Mammary epithelial cell (primary cell): ENCODE measurements at regions of chr16 and their contacts with region 1.

Region 1: GRCh38 chr16:70770626-70771552 is 30.1 kb downstream of the VAC14 start:
- DNase-seq: peak; percentile 47
- H3K4me3 ChIP-seq: no peak overlapping the region
- H3K27ac ChIP-seq: no peak overlapping the region
- H3K4me1 ChIP-seq: peaks cover 19% of the 10 kb centered on the region
- H3K27me3 ChIP-seq: no peaks in the 10 kb centered on the region
- CTCF ChIP-seq: peak; percentile 96 to 97

Region 2: GRCh38 chr16:70364399-70364798 is 406.5 kb before region 1 on chr16:
- CTCF ChIA-PET with region 1: no interaction called
- dilution Hi-C with region 1: loop called (anchors 10 kb)
- in situ Hi-C with region 1: no loop called
- intact Hi-C with region 1: no loop called
- DNase-seq: no peak
- H3K4me3 ChIP-seq: no peak overlapping the region
- H3K27ac ChIP-seq: no peak overlapping the region
- H3K4me1 ChIP-seq: no peaks in the 10 kb centered on the region
- H3K27me3 ChIP-seq: no peaks in the 10 kb centered on the region
- CTCF ChIP-seq: no peak

Region 3: GRCh38 chr16:70523076-70523742 is 247.7 kb before region 1 on chr16 and contains the start of gene COG4:
- CTCF ChIA-PET with region 1: no interaction called
- dilution Hi-C with region 1: no loop called
- in situ Hi-C with region 1: loop called in 1 of 2 experiments (anchors 25 kb)
- intact Hi-C with region 1: loop called (anchors 10 kb)
- DNase-seq: peak; percentile 77
- H3K4me3 ChIP-seq: peak within 1 kb of the TSS; percentile 90 to 97 (median 93)
- H3K27ac ChIP-seq: peak within 1 kb of the TSS; percentile 83
- H3K4me1 ChIP-seq: peaks cover 35% of the 10 kb centered on the region
- H3K27me3 ChIP-seq: no peaks in the 10 kb centered on the region
- CTCF ChIP-seq: no peak
- total RNA-seq, gene COG4: 42.7 to 52.0 TPM

Region 4: DNA sequence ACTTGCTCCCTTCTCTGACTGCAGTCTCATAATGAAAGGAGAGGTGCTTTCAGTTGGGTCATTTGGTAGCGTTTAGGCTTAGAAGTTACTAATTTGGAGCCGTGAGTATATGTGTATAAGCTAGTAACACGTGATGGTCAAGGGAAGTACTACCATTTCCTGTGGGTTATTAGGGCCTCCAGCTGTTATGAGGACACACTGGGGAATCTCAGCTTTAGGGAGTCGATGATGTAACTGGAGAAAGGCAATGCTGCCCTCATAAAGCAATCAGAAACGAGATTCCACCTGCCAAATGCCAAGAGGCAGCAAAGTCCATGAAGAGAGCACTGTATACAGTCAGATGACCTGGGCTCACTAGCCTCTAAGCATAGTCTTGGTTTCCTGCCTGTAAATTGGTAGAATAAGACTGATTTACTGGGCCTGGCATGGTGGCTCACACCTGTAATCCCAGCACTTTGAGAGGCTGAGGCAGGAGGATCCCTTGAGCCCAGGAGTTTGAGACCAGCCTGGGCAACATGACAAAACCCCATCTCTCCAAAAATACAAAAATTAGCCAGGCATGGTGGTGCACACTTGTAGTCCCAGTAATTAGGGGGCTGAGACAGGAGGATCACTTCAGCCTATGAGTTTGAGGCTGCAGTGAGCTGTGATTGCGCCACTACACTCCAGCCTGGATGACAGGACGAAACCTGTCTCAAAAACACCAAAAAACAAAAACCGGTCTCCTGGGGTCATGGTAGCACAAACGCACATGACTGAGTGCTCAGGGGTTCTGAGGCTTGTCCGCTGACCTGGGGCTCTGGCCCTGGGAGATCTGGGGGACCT is 194.2 kb before region 1 on chr16:
- CTCF ChIA-PET with region 1: no interaction called
- dilution Hi-C with region 1: no loop called
- in situ Hi-C with region 1: no loop called
- intact Hi-C with region 1: loop called (anchors 10 kb)
- DNase-seq: peak; percentile 86
- H3K4me3 ChIP-seq: no peak overlapping the region
- H3K27ac ChIP-seq: peak overlapping the region; percentile 37
- H3K4me1 ChIP-seq: peaks cover 68% of the 10 kb centered on the region
- H3K27me3 ChIP-seq: no peaks in the 10 kb centered on the region
- CTCF ChIP-seq: no peak

Region 5: GRCh38 chr16:70685938-70686375 is 84.9 kb before region 1 on chr16 and contains the start of gene MTSS2:
- CTCF ChIA-PET with region 1: interaction called, 3 read pairs
- dilution Hi-C with region 1: no loop called
- in situ Hi-C with region 1: loop called (anchors 10 kb)
- intact Hi-C with region 1: loop called (anchors 2 kb)
- DNase-seq: peak; percentile 59
- H3K4me3 ChIP-seq: peak within 1 kb of the TSS; percentile 84 to 92 (median 88)
- H3K27ac ChIP-seq: peak within 1 kb of the TSS; percentile 26
- H3K4me1 ChIP-seq: peaks cover 57% of the 10 kb centered on the region
- H3K27me3 ChIP-seq: no peaks in the 10 kb centered on the region
- CTCF ChIP-seq: no peak
- total RNA-seq, gene MTSS2: 25.8 to 42.9 TPM

Region 6: GRCh38 chr16:70746708-70747424 is 24.0 kb before region 1 on chr16:
- CTCF ChIA-PET with region 1: no interaction called
- dilution Hi-C with region 1: no loop called
- in situ Hi-C with region 1: no loop called
- intact Hi-C with region 1: loop called (anchors 2 kb)
- DNase-seq: peak; percentile 78
- H3K4me3 ChIP-seq: no peak overlapping the region
- H3K27ac ChIP-seq: peak overlapping the region; percentile 34
- H3K4me1 ChIP-seq: peaks cover 32% of the 10 kb centered on the region
- H3K27me3 ChIP-seq: no peaks in the 10 kb centered on the region
- CTCF ChIP-seq: no peak